Gastrocnemius medialis (tissue), 4 donors: ENCODE measurements at regions of chr18 and their contacts with region 1.

Region 1: GRCh38 chr18:3593904-3594661 is 144.1 kb downstream of the TGIF1 start:
- DNase-seq: peak; percentile 77 to 79
- ATAC-seq: peak; percentile 67 to 72
- H3K4me3 ChIP-seq: peak overlapping the region; percentile 56 to 60 (median 58)
- H3K27ac ChIP-seq: peak overlapping the region; percentile 86 to 95 (median 91)
- H3K4me1 ChIP-seq: peaks cover 35 to 44% of the 10 kb centered on the region in 2 donors
- H3K27me3 ChIP-seq: no peaks in the 10 kb centered on the region
- CTCF ChIP-seq: peak; percentile 61 to 94 (median 85)
- POLR2A ChIP-seq: peak; percentile 50 to 65

Region 2: GRCh38 chr18:3261371-3262246 is 332.5 kb before region 1 on chr18 and contains the start of gene MYL12B:
- in situ Hi-C with region 1: no loop called
- intact Hi-C with region 1: loop called (anchors 5 kb)
- DNase-seq: peak; percentile 61 to 73
- ATAC-seq: peak; percentile 79 to 89
- H3K4me3 ChIP-seq: peak within 1 kb of the TSS; percentile 73 to 98 (median 82)
- H3K27ac ChIP-seq: peak within 1 kb of the TSS; percentile 99
- H3K4me1 ChIP-seq: peaks cover 69 to 83% of the 10 kb centered on the region in 2 donors
- H3K27me3 ChIP-seq: no peaks in the 10 kb centered on the region
- CTCF ChIP-seq: peak in 4 of 5 experiments; percentile 12 to 36 (median 24)
- POLR2A ChIP-seq: peak; percentile 68 to 76
- total RNA-seq, gene MYL12B: 100 to 293 (median 185) TPM

Region 3: DNA sequence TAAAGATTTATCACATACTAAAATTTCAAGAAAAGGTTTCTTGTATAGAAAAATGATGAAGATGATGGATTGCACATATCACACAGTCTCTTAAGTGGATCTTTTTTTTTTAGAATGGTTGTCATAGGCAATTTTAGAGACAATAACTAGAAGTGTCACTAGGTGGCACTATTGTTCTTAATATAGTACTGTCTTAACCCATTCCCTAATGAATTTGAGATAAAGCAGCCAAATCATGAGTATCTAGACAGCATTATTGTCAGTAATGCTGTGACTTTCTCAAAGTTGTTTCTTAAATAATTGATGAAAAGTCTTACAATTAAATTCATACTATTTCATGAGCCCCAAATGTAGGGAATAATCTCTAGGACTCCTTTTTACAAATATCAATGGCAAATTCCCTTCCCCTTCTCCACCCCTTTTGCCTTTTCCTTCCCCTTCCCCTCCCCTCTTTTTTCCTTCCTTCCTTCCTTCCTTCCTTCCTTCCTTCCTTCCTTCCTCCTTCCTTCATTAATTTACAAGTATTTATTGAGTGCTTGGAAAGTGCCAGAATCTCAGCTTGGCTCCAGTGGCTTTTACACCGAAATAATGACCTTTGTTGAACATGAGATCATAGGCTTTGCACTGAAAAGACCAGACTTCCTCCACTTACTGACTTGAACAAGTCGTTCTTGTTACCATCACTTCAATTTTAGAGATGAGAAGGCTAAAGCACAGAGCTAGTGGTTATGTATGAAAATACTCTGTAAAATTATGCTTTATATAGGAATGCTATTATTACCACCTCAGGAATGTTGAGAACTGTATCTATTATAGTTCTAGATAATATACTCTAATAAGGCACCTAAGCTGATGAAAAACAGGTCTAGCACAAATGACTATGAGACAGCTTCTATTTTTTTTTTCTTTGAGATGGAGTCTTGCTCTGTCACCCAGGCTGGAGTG is 312.4 kb before region 1 on chr18:
- in situ Hi-C with region 1: loop called (anchors 5 to 10 kb)
- intact Hi-C with region 1: loop called (anchors 2 kb)
- DNase-seq: no peak
- ATAC-seq: peak; percentile 75 to 82
- H3K4me3 ChIP-seq: no peak overlapping the region
- H3K27ac ChIP-seq: no peak overlapping the region
- H3K4me1 ChIP-seq: peaks cover 9 to 10% of the 10 kb centered on the region in 2 donors
- H3K27me3 ChIP-seq: no peaks in the 10 kb centered on the region
- CTCF ChIP-seq: peak; percentile 68 to 87 (median 70)
- POLR2A ChIP-seq: no peak

Region 4: DNA sequence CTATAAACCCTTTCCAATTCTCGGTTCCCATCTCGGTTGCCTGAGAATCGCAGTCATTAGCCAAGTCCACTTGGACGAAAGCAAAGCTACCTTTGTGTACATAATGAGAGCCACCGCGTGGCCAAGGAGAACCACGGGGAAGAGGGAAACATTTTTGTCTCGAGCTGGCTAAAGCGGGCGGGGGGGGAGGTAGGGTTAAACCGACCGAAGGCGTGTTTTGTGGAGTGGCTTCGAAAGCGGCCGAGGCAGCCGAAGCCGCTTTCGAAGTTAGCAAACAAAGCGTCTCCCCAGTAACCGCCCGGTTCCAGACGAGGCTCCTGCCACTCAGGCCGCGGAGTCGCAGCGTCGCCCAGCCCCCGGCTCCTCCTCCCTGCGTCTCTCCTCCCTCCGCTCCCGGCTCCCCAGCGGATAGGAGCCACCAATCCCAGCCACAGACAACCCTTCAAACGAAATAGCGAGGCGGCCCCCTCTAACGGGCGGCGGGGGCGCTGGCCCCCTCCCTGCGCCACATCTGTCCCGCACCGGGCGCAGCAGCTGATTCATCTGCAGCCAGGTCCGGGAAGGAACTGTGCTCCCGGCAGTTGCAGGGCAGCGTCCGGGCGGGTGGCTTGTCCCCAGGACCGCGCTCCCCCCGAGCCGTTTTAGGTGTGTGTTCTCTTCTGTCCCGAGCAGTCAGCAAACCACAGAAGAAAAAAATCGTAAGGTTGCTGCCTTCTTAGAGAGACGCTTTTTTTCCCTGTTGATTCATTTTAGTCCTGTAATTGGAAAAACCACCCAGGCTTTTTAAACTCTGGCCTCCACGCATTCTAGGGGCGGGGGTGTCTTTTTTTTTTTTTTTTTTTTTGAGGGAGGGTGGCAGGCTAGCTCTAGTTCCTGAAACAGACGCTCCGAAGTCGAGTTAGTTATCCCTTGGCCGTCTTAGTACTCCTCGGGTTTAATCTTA is 145.9 kb before region 1 on chr18:
- in situ Hi-C with region 1: loop called (anchors 5 to 10 kb)
- intact Hi-C with region 1: loop called (anchors 1 kb)
- DNase-seq: peak; percentile 94 to 95
- ATAC-seq: peak; percentile 55 to 57
- H3K4me3 ChIP-seq: peak overlapping the region; percentile 71 to 97 (median 82)
- H3K27ac ChIP-seq: peak overlapping the region; percentile 98 to 99 (median 99)
- H3K4me1 ChIP-seq: peaks cover 8 to 13% of the 10 kb centered on the region in 2 donors
- H3K27me3 ChIP-seq: no peaks in the 10 kb centered on the region
- CTCF ChIP-seq: peak in 1 of 5 experiments; percentile 7
- POLR2A ChIP-seq: peak; percentile 97 to 98

Region 5: DNA sequence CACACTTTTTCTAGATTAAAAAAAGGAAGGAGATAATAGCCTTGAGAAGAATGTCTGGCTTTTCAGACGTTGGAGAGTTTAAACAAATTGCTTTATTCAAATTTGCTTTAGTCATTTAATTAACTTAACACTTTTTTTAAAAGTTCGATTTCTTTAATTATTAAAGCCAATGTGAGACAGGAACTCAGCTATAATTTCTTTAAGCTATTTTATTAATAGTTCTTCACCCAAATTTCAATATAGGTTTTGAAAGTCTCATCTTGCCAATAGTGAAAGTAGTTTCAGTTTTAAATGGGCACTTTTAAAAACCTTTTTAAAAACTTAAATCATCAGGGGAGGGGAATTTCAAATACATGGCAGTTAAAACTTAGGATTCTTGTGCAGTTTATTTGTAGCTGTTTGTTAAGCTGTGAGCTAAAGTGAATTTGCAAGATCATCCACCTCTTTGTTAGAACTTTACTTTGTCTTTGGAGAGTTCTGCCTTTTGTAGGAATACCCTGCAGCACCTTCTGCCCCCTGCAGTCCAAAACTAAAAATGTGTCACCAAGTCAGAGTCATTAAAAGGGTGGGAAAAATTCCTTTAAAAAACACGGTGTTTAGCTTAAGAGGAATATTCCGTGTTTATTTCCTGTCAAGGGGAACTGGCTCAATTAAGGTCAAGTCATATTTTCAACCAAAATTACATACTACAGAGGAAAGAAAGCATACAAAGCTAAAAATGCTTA is 139.6 kb before region 1 on chr18:
- in situ Hi-C with region 1: loop called (anchors 5 to 10 kb)
- intact Hi-C with region 1: loop called (anchors 1 kb)
- DNase-seq: peak in 1 of 2 donors; percentile 30
- ATAC-seq: no peak
- H3K4me3 ChIP-seq: peak overlapping the region; percentile 71 to 97 (median 82)
- H3K27ac ChIP-seq: peak overlapping the region; percentile 98 to 99 (median 99)
- H3K4me1 ChIP-seq: peaks cover 34 to 39% of the 10 kb centered on the region in 2 donors
- H3K27me3 ChIP-seq: no peaks in the 10 kb centered on the region
- CTCF ChIP-seq: peak; percentile 52 to 79 (median 65)
- POLR2A ChIP-seq: no peak

Region 6: DNA sequence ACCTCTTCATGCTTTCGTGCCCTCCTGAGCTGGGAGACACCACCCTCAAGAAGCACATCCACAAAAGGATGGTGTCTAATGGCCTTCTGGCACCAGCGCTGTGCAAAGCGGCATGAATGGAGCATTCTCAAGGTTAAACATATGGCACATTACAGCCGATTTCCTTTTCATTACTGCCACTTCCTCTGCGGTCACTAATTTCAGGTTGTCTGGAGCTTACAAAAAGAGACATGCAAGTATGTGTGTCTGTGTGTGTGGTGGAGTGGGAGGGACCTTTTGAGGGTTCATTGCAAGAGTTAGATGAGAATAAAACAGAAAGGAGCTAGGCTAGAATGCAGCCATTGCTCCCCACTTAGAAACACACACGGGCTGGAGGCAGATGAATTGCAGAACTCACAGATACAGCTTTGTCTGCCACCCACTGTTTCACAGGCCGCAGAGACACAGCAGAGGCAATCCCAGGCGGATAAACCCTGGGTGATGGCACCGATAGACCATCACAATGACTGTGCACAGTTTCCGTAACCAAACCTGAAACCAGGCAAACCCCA is 68.1 kb before region 1 on chr18:
- in situ Hi-C with region 1: no loop called
- intact Hi-C with region 1: loop called (anchors 2 kb)
- DNase-seq: peak in 1 of 2 donors; percentile 24
- ATAC-seq: peak; percentile 63 to 70
- H3K4me3 ChIP-seq: peak overlapping the region in 1 of 4 donors; percentile 22
- H3K27ac ChIP-seq: peak overlapping the region; percentile 66 to 75 (median 73)
- H3K4me1 ChIP-seq: peaks cover 13% of the 10 kb centered on the region in 2 donors
- H3K27me3 ChIP-seq: no peaks in the 10 kb centered on the region
- CTCF ChIP-seq: no peak
- POLR2A ChIP-seq: no peak

Region 7: GRCh38 chr18:3623769-3624545 is 29.9 kb after region 1 on chr18:
- in situ Hi-C with region 1: no loop called
- intact Hi-C with region 1: loop called (anchors 2 kb)
- DNase-seq: peak; percentile 61 to 81
- ATAC-seq: peak; percentile 75 to 80
- H3K4me3 ChIP-seq: peak overlapping the region; percentile 17 to 52 (median 22)
- H3K27ac ChIP-seq: peak overlapping the region; percentile 71 to 79 (median 74)
- H3K4me1 ChIP-seq: peaks cover 14 to 15% of the 10 kb centered on the region in 2 donors
- H3K27me3 ChIP-seq: no peaks in the 10 kb centered on the region
- CTCF ChIP-seq: no peak
- POLR2A ChIP-seq: peak; percentile 64

Region 8: GRCh38 chr18:5294457-5295230 is 1700.6 kb after region 1 on chr18:
- in situ Hi-C with region 1: no loop called
- intact Hi-C with region 1: no loop called
- DNase-seq: peak; percentile 15 to 40
- ATAC-seq: peak; percentile 2 to 13
- H3K4me3 ChIP-seq: peak overlapping the region; percentile 89 to 96 (median 92)
- H3K27ac ChIP-seq: peak overlapping the region; percentile 85 to 93 (median 90)
- H3K4me1 ChIP-seq: peaks cover 8 to 15% of the 10 kb centered on the region in 2 donors
- H3K27me3 ChIP-seq: no peaks in the 10 kb centered on the region
- CTCF ChIP-seq: no peak
- POLR2A ChIP-seq: no peak